Transverse colon (tissue), 4 donors: ENCODE measurements at regions of chr18 and their contacts with region 1.

Region 1: DNA sequence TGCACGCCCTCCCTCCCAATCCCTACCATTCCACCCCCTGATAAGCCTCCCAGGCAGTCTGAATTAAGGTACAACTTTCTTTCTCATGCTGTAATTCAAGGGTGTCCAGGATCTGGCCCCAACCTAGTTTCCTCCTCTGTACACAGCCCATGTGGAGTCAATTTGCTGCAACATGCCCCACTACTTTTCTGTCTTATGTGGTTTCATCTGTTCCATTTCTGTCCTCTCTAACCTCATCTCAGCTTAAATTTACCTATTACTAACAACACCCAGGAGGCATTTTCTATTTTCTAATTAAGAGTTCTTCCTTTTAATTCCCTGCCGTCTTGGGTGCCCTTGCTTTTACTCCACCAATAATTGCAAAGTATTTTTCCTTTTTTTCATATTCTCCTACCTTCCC is 10.0 kb downstream of the PPP4R1 start:
- DNase-seq: no peak
- H3K4me3 ChIP-seq: no peak overlapping the region
- H3K27ac ChIP-seq: no peak overlapping the region
- H3K4me1 ChIP-seq: peaks cover 5 to 14% (median 13%) of the 10 kb centered on the region in 4 donors
- H3K27me3 ChIP-seq: no peaks in the 10 kb centered on the region
- CTCF ChIP-seq: no peak
- EP300 ChIP-seq: no peak
- POLR2A ChIP-seq: no peak

Region 2: DNA sequence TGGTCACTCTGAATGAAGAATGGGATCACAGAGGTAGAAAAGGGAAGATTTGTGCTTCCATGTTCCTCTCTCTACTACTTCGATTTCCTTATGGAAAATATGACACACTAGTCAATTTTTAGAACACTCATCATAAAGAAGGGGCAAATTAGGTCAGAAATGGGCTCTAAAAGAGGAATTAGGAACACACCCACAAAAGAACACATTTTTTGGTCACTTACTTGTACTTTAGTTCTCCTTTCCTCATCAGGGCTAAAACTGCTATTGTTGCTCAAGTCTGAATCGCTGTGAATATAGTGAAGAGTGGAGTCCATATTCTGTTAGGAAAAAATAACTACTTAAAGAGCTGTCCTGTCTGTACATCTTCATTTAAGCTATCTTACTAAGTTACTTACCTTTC is 42.6 kb before region 1 on chr18:
- in situ Hi-C with region 1: no loop called
- intact Hi-C with region 1: no loop called
- DNase-seq: no peak
- H3K4me3 ChIP-seq: no peak overlapping the region
- H3K27ac ChIP-seq: no peak overlapping the region
- H3K4me1 ChIP-seq: peaks cover 0 to 5% (median 0%) of the 10 kb centered on the region in 4 donors
- H3K27me3 ChIP-seq: no peaks in the 10 kb centered on the region
- CTCF ChIP-seq: no peak
- EP300 ChIP-seq: no peak
- POLR2A ChIP-seq: no peak

Region 3: GRCh38 chr18:10020171-10020570 is 415.8 kb after region 1 on chr18:
- in situ Hi-C with region 1: no loop called
- intact Hi-C with region 1: no loop called
- DNase-seq: no peak
- H3K4me3 ChIP-seq: no peak overlapping the region
- H3K27ac ChIP-seq: no peak overlapping the region
- H3K4me1 ChIP-seq: peaks cover 0 to 17% (median 3%) of the 10 kb centered on the region in 4 donors
- H3K27me3 ChIP-seq: no peaks in the 10 kb centered on the region
- CTCF ChIP-seq: no peak
- EP300 ChIP-seq: no peak
- POLR2A ChIP-seq: no peak

Region 4: DNA sequence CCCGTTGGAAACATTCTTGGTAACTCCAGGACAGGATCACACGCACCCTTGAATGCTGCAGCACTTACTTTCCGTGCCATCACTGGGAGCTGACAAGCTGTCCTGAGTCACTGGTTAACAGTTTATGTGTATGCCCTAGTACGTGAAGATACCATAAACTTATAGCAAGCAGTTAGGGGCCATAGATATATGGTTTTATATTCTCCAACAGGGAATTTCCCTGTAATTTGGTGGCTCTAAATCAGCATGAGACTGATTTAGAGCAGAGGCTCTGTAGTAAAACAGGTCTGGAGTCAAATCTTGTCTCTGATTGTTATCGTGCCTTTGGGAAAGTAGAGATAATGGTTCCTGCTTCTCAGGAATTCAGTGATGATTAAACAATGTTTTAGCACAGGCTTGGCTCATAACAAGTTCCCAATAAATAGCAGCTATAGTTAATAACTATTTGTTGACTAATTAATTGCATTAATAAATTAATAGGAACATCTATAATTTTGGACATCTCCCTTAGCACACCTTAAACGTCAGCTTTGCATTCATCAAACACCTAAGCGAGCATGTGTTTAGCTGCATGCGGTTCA is 524.7 kb after region 1 on chr18:
- in situ Hi-C with region 1: no loop called
- intact Hi-C with region 1: loop called (anchors 5 kb)
- DNase-seq: no peak
- H3K4me3 ChIP-seq: no peak overlapping the region
- H3K27ac ChIP-seq: no peak overlapping the region
- H3K4me1 ChIP-seq: peaks cover 0 to 12% (median 4%) of the 10 kb centered on the region in 4 donors
- H3K27me3 ChIP-seq: peaks cover 14% of the 10 kb centered on the region
- CTCF ChIP-seq: no peak
- EP300 ChIP-seq: no peak
- POLR2A ChIP-seq: no peak